Activated CD8-positive, alpha-beta T cell treated with anti-CD3 and anti-CD28 coated beads for 36 hours (primary cell): ENCODE measurements at regions of chr6 and their contacts with region 1.

Region 1: DNA sequence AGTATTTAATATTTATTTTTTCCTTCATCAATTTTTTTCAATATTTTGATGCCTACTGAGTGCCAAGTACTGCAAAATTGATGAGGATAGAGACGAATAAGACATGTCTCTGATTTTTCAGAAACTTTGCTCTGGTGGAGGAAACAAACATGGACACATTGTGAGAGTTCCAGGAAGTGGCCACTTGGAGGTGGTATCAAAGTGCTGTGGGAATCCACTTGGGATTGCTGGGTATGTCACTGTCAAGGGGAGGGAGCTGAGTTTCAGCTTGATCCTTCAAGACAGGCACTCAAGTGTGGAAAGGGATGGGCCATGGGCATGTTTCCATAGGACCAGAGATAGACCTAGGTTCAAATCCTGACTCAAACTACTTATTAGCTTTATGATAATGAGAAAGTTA is 24.5 kb upstream of the ABCC10 start:
- DNase-seq: no peak
- ATAC-seq: no peak
- H3K4me3 Mint-ChIP-seq: no peak overlapping the region
- H3K27ac Mint-ChIP-seq: no peak overlapping the region
- H3K4me1 Mint-ChIP-seq: peaks cover 1% of the 10 kb centered on the region
- H3K27me3 Mint-ChIP-seq: peaks cover 5% of the 10 kb centered on the region
- CTCF ChIP-seq: no peak

Region 2: GRCh38 chr6:43263314-43264178 is 139.3 kb before region 1 on chr6:
- CTCF ChIA-PET with region 1: interaction called, 20 read pairs
- POLR2A ChIA-PET with region 1: no interaction called
- intact Hi-C with region 1: loop called (anchors 2 kb)
- DNase-seq: peak; percentile 87
- ATAC-seq: peak; percentile 100
- H3K4me3 Mint-ChIP-seq: no peak overlapping the region
- H3K27ac Mint-ChIP-seq: no peak overlapping the region
- H3K4me1 Mint-ChIP-seq: no peaks in the 10 kb centered on the region
- H3K27me3 Mint-ChIP-seq: peaks cover 2% of the 10 kb centered on the region
- CTCF ChIP-seq: peak; percentile 81

Region 3: GRCh38 chr6:43308101-43308989 is 94.5 kb before region 1 on chr6 and contains the start of gene CRIP3:
- CTCF ChIA-PET with region 1: interaction called, 25 read pairs
- POLR2A ChIA-PET with region 1: no interaction called
- intact Hi-C with region 1: no loop called
- DNase-seq: peak; percentile 68
- ATAC-seq: peak; percentile 90
- H3K4me3 Mint-ChIP-seq: peak within 1 kb of the TSS; percentile 74
- H3K27ac Mint-ChIP-seq: no peak within 1 kb of the TSS
- H3K4me1 Mint-ChIP-seq: peaks cover 8% of the 10 kb centered on the region
- H3K27me3 Mint-ChIP-seq: peaks cover 3% of the 10 kb centered on the region
- CTCF ChIP-seq: peak; percentile 49
- total RNA-seq, gene CRIP3: 2.2 to 2.4 TPM

Region 4: DNA sequence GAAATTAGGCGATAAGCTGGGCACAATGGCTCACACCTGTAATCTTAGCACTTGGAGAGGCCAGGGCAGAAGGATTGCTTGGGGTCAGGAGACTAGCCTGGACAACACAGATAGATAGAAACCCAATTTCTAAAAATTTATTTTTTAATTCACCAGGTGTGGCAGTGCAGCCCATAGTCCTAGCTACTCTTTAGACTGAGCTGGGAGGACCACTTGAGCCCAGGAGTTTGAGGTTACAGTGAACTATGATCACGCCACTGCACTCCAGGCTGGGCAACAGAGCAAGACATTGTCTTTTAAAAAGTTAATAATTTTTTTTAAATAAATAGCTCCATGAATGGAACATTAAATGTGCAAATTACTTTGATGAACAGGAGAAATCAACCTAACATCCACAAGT is 41.6 kb before region 1 on chr6:
- CTCF ChIA-PET with region 1: interaction called, 19 read pairs
- POLR2A ChIA-PET with region 1: no interaction called
- intact Hi-C with region 1: no loop called
- DNase-seq: no peak
- ATAC-seq: no peak
- H3K4me3 Mint-ChIP-seq: no peak overlapping the region
- H3K27ac Mint-ChIP-seq: no peak overlapping the region
- H3K4me1 Mint-ChIP-seq: peaks cover 13% of the 10 kb centered on the region
- H3K27me3 Mint-ChIP-seq: no peaks in the 10 kb centered on the region
- CTCF ChIP-seq: no peak

Region 5: GRCh38 chr6:43383021-43383667 is 19.7 kb before region 1 on chr6:
- CTCF ChIA-PET with region 1: interaction called, 11 read pairs
- POLR2A ChIA-PET with region 1: no interaction called
- intact Hi-C with region 1: no loop called
- DNase-seq: no peak
- ATAC-seq: no peak
- H3K4me3 Mint-ChIP-seq: peak overlapping the region; percentile 55
- H3K27ac Mint-ChIP-seq: peak overlapping the region; percentile 94
- H3K4me1 Mint-ChIP-seq: peaks cover 41% of the 10 kb centered on the region
- H3K27me3 Mint-ChIP-seq: peaks cover 6% of the 10 kb centered on the region
- CTCF ChIP-seq: no peak

Region 6: DNA sequence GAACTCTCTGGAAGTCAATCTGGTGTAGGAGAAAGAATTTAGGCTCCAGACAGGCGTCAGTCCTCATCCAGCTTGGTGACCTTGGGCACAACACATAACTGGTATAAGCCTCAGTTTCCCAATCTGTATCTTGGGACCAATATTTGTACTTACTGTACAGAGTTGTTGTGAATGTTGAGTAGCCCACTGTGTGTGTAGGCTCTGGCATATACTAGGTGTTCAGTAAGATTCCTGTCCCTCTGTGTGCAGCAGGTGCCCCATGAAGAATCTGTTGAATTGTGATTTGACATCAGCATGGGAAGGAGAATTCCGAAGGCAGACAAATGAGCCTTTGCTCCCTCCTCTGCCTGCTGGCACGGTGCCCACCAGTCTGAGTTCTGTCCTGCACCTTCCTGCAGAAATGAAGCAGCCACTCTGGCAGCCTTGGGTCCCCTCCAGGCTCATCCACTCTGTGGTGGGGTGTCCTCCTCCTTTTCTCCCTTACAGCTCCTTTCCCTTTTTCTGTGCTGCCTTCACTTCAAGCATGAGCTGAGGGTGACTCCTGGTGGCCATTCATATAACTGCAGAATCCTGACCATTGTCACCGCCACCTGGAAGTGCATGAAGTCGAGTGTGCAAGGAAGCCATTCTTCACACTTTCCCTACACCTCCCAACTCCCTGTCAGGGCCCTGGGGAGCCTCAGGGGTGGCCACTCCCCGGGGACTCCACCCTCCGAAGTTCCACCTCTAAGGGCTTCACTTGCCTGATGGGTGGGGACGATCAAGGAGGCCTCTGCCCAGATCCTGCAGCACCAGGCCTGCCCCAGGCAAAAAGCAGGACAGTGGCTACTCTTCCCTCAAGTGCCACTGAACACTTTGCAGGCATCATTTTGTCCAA is 676.2 kb after region 1 on chr6:
- CTCF ChIA-PET with region 1: no interaction called
- POLR2A ChIA-PET with region 1: no interaction called
- intact Hi-C with region 1: no loop called
- DNase-seq: peak; percentile 81
- ATAC-seq: peak; percentile 55
- H3K4me3 Mint-ChIP-seq: no peak overlapping the region
- H3K27ac Mint-ChIP-seq: no peak overlapping the region
- H3K4me1 Mint-ChIP-seq: peaks cover 14% of the 10 kb centered on the region
- H3K27me3 Mint-ChIP-seq: peaks cover 11% of the 10 kb centered on the region
- CTCF ChIP-seq: peak; percentile 90